HEK293 (cell line): ENCODE measurements at regions of chr12 and their contacts with region 1.

Region 1: DNA sequence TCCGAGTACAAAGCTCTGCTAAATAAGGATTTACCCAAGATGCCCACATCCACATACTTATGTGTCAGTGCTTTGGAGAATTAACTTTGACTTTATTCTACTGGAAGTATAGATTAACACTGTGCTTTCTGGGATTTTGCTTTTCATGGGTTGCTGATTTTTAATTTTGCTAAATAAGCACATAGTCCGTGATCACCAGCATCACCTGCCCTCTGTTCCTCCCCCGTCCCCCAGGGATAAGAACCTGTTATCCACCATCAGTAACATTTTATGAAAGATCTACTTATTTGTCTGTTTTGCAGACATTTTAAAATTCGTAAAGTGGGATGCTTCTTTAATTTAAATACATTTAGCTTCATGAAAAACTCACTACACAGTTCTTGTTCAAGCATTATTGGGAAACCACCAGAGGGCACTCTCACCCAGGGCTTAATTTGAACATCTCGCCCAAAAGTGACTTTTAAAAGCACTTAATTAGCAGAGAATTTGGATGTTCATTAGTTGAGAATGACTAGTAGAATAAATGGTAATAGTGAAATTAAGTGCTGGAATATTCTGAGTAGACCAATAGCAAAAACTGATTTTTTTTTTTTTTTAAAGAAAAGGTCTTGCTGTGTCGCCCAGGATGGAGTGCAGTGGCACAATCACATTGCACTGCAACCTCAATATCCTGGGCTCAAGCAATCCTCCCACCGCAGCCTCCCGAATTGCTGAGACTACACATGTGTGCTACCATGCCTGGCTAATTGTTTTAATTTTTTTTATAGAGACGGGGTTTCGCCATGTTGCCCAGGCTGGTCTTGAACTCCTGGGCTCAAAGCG is 35.7 kb downstream of the MRPL42 start:
- H3K4me3 ChIP-seq: no peak overlapping the region
- H3K27ac ChIP-seq: no peak overlapping the region
- H3K4me1 ChIP-seq: no peaks in the 10 kb centered on the region
- CTCF ChIP-seq: peak; percentile 38; the same call in 1 of the 2 replicates

Region 2: DNA sequence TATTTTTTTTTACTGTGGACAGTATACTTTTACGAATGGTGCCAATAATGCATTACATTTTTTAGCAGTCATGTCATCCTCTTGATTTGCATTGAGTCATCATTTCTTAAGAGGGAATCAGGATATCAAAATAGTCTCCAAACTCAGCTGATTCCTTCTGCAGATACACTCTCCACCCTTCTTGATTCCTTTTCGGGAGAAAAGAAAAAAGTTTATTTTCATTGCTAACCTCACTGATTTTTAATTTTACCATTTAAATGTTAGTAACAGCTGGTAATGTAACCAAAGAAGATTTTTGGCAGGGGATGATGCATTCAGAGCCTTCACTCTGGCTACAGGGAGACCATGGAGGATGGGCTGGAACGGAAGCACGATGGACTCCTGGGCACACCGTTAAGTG is 11.8 kb after region 1 on chr12:
- CTCF ChIA-PET with region 1: interaction called, 34 read pairs
- POLR2A ChIA-PET with region 1: no interaction called
- H3K4me3 ChIP-seq: no peak overlapping the region
- H3K27ac ChIP-seq: no peak overlapping the region
- H3K4me1 ChIP-seq: no peaks in the 10 kb centered on the region
- CTCF ChIP-seq: no peak

Region 3: GRCh38 chr12:93569656-93570551 is 66.9 kb after region 1 on chr12:
- CTCF ChIA-PET with region 1: interaction called, 15 read pairs
- POLR2A ChIA-PET with region 1: no interaction called
- H3K4me3 ChIP-seq: peak overlapping the region; percentile 53
- H3K27ac ChIP-seq: peak overlapping the region; percentile 94
- H3K4me1 ChIP-seq: no peaks in the 10 kb centered on the region
- CTCF ChIP-seq: peak; percentile 69

Region 4: DNA sequence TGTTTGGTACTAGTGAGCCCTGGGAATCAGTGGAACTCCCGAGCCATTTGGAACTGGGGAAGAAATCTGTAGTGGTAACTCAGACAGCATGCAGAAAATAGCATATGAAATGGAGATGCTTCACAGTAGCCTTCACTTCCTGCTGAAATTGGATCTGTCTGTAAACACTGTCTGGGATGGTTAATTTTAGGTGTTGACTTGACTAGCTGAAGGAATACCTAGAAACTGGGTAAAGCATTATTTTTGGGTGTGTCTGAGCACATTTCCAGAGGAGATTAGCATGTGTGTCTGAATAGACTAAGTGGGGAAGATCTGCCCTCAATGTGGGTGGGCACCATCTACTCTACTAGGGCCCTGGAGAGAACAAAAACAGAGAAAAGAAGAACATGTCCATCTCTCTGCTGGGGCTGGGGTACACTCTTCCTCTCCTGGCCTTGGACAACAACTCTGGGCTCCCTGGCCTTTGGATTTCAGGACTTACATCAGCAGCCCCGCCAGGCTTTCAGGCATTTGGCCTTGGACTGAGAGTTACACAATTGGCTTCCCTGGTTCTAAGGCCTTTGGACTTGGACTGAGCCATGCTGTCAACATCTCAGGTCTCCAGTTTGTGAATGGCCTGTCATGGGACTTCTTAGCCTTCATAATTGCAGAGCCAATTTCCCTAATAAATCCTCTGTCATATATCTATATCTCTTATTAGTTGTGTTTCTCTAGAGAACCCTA is 160.2 kb after region 1 on chr12:
- CTCF ChIA-PET with region 1: no interaction called
- POLR2A ChIA-PET with region 1: no interaction called
- H3K4me3 ChIP-seq: no peak overlapping the region
- H3K27ac ChIP-seq: no peak overlapping the region
- H3K4me1 ChIP-seq: no peaks in the 10 kb centered on the region
- CTCF ChIP-seq: no peak

Region 5: GRCh38 chr12:93689076-93689834 is 186.2 kb after region 1 on chr12:
- CTCF ChIA-PET with region 1: interaction called, 11 read pairs
- POLR2A ChIA-PET with region 1: no interaction called
- H3K4me3 ChIP-seq: no peak overlapping the region
- H3K27ac ChIP-seq: no peak overlapping the region
- H3K4me1 ChIP-seq: no peaks in the 10 kb centered on the region
- CTCF ChIP-seq: no peak

Region 6: GRCh38 chr12:93742110-93742934 is 239.3 kb after region 1 on chr12:
- CTCF ChIA-PET with region 1: interaction called, 11 read pairs
- POLR2A ChIA-PET with region 1: no interaction called
- H3K4me3 ChIP-seq: peak overlapping the region; percentile 62
- H3K27ac ChIP-seq: peak overlapping the region; percentile 51
- H3K4me1 ChIP-seq: peaks cover 3% of the 10 kb centered on the region; the same call in 1 of the 2 replicates
- CTCF ChIP-seq: peak; percentile 38; the same call in 1 of the 2 replicates

Region 7: GRCh38 chr12:94074980-94075928 is 572.2 kb after region 1 on chr12:
- CTCF ChIA-PET with region 1: interaction called, 19 read pairs
- POLR2A ChIA-PET with region 1: no interaction called
- H3K4me3 ChIP-seq: no peak overlapping the region
- H3K27ac ChIP-seq: no peak overlapping the region
- H3K4me1 ChIP-seq: no peaks in the 10 kb centered on the region
- CTCF ChIP-seq: peak; percentile 33; the same call in 1 of the 2 replicates

Region 8: DNA sequence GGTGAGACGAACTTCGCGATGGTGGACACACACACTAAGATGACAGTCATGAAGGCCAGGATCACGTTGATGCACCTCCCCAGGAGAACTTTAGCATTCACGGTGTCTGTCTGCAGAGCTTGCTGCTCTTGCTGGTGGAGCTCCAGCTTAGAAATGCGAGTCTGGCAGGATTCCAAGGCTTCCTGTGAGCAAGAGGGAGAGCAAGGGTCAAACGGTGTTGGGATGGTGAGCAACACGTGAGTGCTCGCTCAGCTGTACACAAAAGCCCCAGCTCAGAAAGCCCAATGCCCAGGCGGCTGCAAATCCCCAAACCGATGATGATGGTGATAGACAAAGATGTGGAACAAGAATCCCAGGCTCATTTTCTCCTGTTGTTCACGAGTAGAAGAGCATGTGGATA is 1068.5 kb after region 1 on chr12:
- CTCF ChIA-PET with region 1: interaction called, 11 read pairs
- POLR2A ChIA-PET with region 1: no interaction called
- H3K4me3 ChIP-seq: no peak overlapping the region
- H3K27ac ChIP-seq: no peak overlapping the region
- H3K4me1 ChIP-seq: peaks cover 12% of the 10 kb centered on the region
- CTCF ChIP-seq: no peak